ENCODE measurements at regions of chr5 and their contacts with region 1.

Region 1: GRCh38 chr5:5421961-5422818 is at the start of gene ICE1:
- DNase-seq: peak; percentile 99
- H3K4me3 ChIP-seq: peak within 1 kb of the TSS; percentile 96 to 100 (median 97)
- H3K27ac ChIP-seq: peak within 1 kb of the TSS; percentile 93 to 96 (median 96)
- H3K4me1 ChIP-seq: peaks cover 26 to 57% (median 47%) of the 10 kb centered on the region in 4 donors
- H3K27me3 ChIP-seq: no peaks in the 10 kb centered on the region
- CTCF ChIP-seq: no peak
- EP300 ChIP-seq: peak; percentile 89
- POLR2A ChIP-seq: peak; percentile 26
- total RNA-seq, gene ICE1: 27.6 to 31.6 (median 30.1) TPM

Region 2: DNA sequence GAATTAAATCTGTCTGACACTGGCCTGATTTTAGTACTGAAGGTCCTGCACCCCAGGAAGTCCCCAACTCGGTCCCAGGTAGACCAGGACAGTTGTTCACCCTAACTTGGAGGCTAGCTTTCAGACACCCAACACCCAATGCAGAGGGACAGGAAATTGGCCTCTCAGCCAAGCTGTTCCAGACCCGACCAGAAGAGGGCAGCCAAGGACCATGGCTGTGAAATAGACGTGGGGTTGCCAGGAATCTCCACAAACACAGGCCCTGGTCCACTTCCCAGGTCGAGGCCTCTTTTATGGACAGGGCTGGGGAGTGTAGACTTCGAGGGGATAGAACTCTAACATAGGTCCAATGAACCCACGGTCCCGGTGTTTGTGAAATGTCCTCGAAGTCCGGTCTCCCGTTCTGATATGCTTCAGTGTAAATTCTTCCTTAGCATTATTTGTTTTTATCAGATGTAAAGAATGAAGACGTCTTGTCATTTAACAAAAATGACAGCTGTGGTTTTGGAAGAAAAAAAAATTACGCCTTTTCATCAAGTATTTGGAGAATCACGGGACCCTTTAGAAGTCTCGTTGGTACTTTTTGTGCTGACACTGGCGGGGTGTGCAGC is 542.4 kb before region 1 on chr5:
- intact Hi-C with region 1: loop called (anchors 10 kb)
- DNase-seq: peak; percentile 94
- H3K4me3 ChIP-seq: no peak overlapping the region
- H3K27ac ChIP-seq: no peak overlapping the region
- H3K4me1 ChIP-seq: peaks cover 0 to 14% (median 9%) of the 10 kb centered on the region in 4 donors
- H3K27me3 ChIP-seq: peaks cover 0 to 11% (median 0%) of the 10 kb centered on the region in 4 donors
- CTCF ChIP-seq: peak; percentile 73 to 94 (median 85)
- EP300 ChIP-seq: no peak
- POLR2A ChIP-seq: no peak

Region 3: GRCh38 chr5:5141625-5142532 is 280.3 kb before region 1 on chr5:
- intact Hi-C with region 1: loop called (anchors 2 kb)
- DNase-seq: no peak
- H3K4me3 ChIP-seq: peak overlapping the region in 3 of 4 donors; percentile 42 to 57 (median 47)
- H3K27ac ChIP-seq: no peak overlapping the region
- H3K4me1 ChIP-seq: peaks cover 20 to 24% (median 23%) of the 10 kb centered on the region in 4 donors
- H3K27me3 ChIP-seq: peaks cover 0 to 58% (median 20%) of the 10 kb centered on the region in 4 donors
- CTCF ChIP-seq: peak; percentile 62 to 80 (median 71)
- EP300 ChIP-seq: no peak
- POLR2A ChIP-seq: no peak

Region 4: DNA sequence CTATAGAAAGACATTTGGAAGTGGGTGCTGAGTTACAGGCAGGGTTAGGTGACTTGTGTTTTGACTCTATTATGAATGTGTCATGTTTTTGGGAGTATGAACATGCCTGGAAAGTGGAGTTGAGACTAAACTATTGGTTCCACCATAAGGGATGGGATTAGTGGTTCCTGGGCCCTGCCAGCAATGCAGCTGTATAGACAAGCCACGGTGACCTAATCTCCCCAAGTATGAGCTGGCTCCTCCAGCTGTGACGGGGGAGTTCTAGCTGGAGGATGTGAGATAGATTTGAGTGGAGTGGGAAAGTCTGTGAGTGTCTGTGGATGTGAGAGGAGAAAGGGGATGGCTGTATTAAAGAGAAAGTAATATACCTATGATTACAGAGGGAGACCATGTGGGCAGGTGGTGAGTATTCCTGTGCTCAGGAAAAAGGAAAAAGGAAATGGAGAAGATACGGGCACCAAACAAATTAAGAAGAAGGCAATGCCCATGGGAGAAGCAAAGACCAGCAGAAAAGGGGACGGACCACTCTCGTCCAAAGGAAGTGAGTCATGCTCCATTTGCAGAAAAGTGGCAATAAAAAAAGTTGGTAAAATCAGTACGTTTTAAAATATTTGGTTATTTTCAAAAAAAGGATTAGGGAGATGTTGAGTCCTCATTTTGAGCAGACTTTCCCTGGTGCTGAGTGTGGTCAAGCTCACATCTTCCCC is 48.0 kb before region 1 on chr5:
- intact Hi-C with region 1: no loop called
- DNase-seq: no peak
- H3K4me3 ChIP-seq: no peak overlapping the region
- H3K27ac ChIP-seq: no peak overlapping the region
- H3K4me1 ChIP-seq: peaks cover 0 to 15% (median 0%) of the 10 kb centered on the region in 4 donors
- H3K27me3 ChIP-seq: no peaks in the 10 kb centered on the region
- CTCF ChIP-seq: no peak
- EP300 ChIP-seq: no peak
- POLR2A ChIP-seq: no peak

Region 5: GRCh38 chr5:5523066-5523505 is 100.9 kb after region 1 on chr5:
- intact Hi-C with region 1: no loop called
- DNase-seq: no peak
- H3K4me3 ChIP-seq: no peak overlapping the region
- H3K27ac ChIP-seq: no peak overlapping the region
- H3K4me1 ChIP-seq: no peaks in the 10 kb centered on the region
- H3K27me3 ChIP-seq: no peaks in the 10 kb centered on the region
- CTCF ChIP-seq: no peak
- EP300 ChIP-seq: no peak
- POLR2A ChIP-seq: no peak

Region 6: GRCh38 chr5:6704361-6704851 is 1282.2 kb after region 1 on chr5:
- intact Hi-C with region 1: loop called (anchors 5 kb)
- DNase-seq: peak; percentile 91
- H3K4me3 ChIP-seq: peak overlapping the region in 2 of 4 donors; percentile 2 to 13
- H3K27ac ChIP-seq: peak overlapping the region; percentile 80 to 87 (median 83)
- H3K4me1 ChIP-seq: peaks cover 17 to 33% (median 29%) of the 10 kb centered on the region in 4 donors
- H3K27me3 ChIP-seq: no peaks in the 10 kb centered on the region
- CTCF ChIP-seq: no peak
- EP300 ChIP-seq: no peak
- POLR2A ChIP-seq: no peak